ENCODE measurements at regions of chr5 and their contacts with region 1.

Region 1: GRCh38 chr5:163408311-163408923 is 29.0 kb upstream of the CCNG1 start:
- DNase-seq: peak; percentile 56
- H3K4me3 Mint-ChIP-seq: no peak overlapping the region
- H3K27ac Mint-ChIP-seq: no peak overlapping the region
- H3K4me1 Mint-ChIP-seq: peaks cover 5% of the 10 kb centered on the region
- H3K27me3 Mint-ChIP-seq: peaks cover 2% of the 10 kb centered on the region

Region 2: GRCh38 chr5:163115011-163115410 is 293.4 kb before region 1 on chr5:
- CTCF ChIA-PET with region 1: no interaction called
- POLR2A ChIA-PET with region 1: no interaction called
- DNase-seq: no peak
- H3K4me3 Mint-ChIP-seq: no peak overlapping the region
- H3K27ac Mint-ChIP-seq: no peak overlapping the region
- H3K4me1 Mint-ChIP-seq: no peaks in the 10 kb centered on the region
- H3K27me3 Mint-ChIP-seq: no peaks in the 10 kb centered on the region

Region 3: GRCh38 chr5:163347671-163348070 is 60.7 kb before region 1 on chr5:
- CTCF ChIA-PET with region 1: interaction called, 18 read pairs
- POLR2A ChIA-PET with region 1: no interaction called
- DNase-seq: peak; percentile 60
- H3K4me3 Mint-ChIP-seq: no peak overlapping the region
- H3K27ac Mint-ChIP-seq: no peak overlapping the region
- H3K4me1 Mint-ChIP-seq: no peaks in the 10 kb centered on the region
- H3K27me3 Mint-ChIP-seq: peaks cover 1% of the 10 kb centered on the region

Region 4: DNA sequence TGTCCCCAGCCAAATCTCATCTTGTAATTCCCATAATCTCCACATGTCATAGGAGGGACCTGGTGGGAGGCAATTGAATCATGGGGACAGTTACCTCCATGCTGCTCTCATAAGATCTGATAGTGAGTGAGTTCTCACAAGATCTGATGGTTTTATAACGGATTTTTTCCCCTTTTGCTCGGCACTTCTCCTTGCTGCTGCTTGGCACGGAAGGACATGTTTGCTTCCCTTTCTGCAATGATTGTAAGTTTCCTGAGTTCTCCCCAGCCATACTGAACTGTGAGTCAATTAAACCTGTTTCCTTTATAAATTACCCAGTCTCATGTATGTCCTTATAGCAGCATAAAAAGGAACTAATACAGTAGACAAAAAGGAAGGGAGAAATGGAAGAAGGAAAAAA is 47.8 kb before region 1 on chr5:
- CTCF ChIA-PET with region 1: no interaction called
- POLR2A ChIA-PET with region 1: no interaction called
- DNase-seq: no peak
- H3K4me3 Mint-ChIP-seq: no peak overlapping the region
- H3K27ac Mint-ChIP-seq: no peak overlapping the region
- H3K4me1 Mint-ChIP-seq: no peaks in the 10 kb centered on the region
- H3K27me3 Mint-ChIP-seq: no peaks in the 10 kb centered on the region

Region 5: GRCh38 chr5:163397354-163397753 is 11.1 kb before region 1 on chr5:
- CTCF ChIA-PET with region 1: interaction called, 22 read pairs
- POLR2A ChIA-PET with region 1: no interaction called
- DNase-seq: no peak
- H3K4me3 Mint-ChIP-seq: no peak overlapping the region
- H3K27ac Mint-ChIP-seq: no peak overlapping the region
- H3K4me1 Mint-ChIP-seq: no peaks in the 10 kb centered on the region
- H3K27me3 Mint-ChIP-seq: peaks cover 16% of the 10 kb centered on the region

Region 6: DNA sequence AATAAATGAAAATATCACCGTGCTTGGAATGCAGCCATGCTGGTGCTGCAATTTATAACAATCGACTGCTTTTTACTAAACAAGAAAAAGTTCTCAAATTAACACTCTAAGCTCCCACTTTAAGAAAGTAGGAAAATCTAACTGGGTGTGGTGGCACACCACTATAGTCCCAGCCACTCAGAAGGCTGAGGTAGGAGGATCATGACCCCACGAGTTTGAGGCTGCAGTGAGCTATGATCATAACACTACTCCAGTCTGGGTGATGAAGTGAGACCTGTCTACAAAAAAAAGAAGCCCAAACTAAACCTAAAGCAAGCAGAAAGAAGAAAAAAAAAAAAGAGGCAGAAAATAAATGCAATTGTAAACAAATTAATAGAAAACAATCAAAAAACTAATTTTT is 39.5 kb after region 1 on chr5:
- CTCF ChIA-PET with region 1: no interaction called
- POLR2A ChIA-PET with region 1: no interaction called
- DNase-seq: no peak
- H3K4me3 Mint-ChIP-seq: no peak overlapping the region
- H3K27ac Mint-ChIP-seq: no peak overlapping the region
- H3K4me1 Mint-ChIP-seq: peaks cover 7% of the 10 kb centered on the region
- H3K27me3 Mint-ChIP-seq: no peaks in the 10 kb centered on the region

Region 7: GRCh38 chr5:163612358-163613149 is 204.1 kb after region 1 on chr5:
- CTCF ChIA-PET with region 1: no interaction called
- POLR2A ChIA-PET with region 1: no interaction called
- DNase-seq: no peak
- H3K4me3 Mint-ChIP-seq: no peak overlapping the region
- H3K27ac Mint-ChIP-seq: no peak overlapping the region
- H3K4me1 Mint-ChIP-seq: no peaks in the 10 kb centered on the region
- H3K27me3 Mint-ChIP-seq: no peaks in the 10 kb centered on the region